ENCODE measurements at regions of chr13 and their contacts with region 1.

Region 1: GRCh38 chr13:44917589-44918325 is 71.5 kb downstream of the NUFIP1 start:
- DNase-seq: peak; percentile 97
- H3K4me3 ChIP-seq: peak overlapping the region; percentile 53
- H3K27ac ChIP-seq: peak overlapping the region; percentile 90
- H3K4me1 ChIP-seq: peaks cover 15% of the 10 kb centered on the region
- H3K27me3 ChIP-seq: no peaks in the 10 kb centered on the region
- CTCF ChIP-seq: peak; percentile 38; the same call in 1 of the 2 replicates

Region 2: GRCh38 chr13:44404261-44405132 is 513.3 kb before region 1 on chr13:
- CTCF ChIA-PET with region 1: no interaction called
- POLR2A ChIA-PET with region 1: interaction called, 16 read pairs
- intact Hi-C with region 1: no loop called
- DNase-seq: no peak
- H3K4me3 ChIP-seq: no peak overlapping the region
- H3K27ac ChIP-seq: no peak overlapping the region
- H3K4me1 ChIP-seq: no peaks in the 10 kb centered on the region
- H3K27me3 ChIP-seq: no peaks in the 10 kb centered on the region
- CTCF ChIP-seq: no peak

Region 3: DNA sequence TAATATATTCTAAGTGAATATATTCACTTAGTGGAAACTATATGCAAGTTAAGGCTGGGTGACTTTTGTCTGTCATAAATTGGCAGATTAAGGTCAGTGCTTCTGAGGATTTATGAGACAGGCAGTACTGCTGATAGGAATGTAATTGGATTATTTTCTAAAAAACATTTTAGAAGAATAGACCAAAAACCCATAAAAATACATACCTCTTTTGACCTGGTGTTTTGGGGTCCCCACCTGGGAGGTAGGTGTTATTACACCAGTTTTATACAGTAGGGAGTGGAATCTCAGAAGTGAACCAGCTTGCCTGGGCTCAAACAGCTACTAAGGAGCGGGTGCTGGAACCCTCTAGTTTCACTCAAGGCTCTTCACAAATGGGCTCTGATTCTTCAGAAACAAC is 572.3 kb after region 1 on chr13:
- CTCF ChIA-PET with region 1: no interaction called
- POLR2A ChIA-PET with region 1: no interaction called
- intact Hi-C with region 1: no loop called
- DNase-seq: peak; percentile 6
- H3K4me3 ChIP-seq: no peak overlapping the region
- H3K27ac ChIP-seq: no peak overlapping the region
- H3K4me1 ChIP-seq: peaks cover 7% of the 10 kb centered on the region
- H3K27me3 ChIP-seq: no peaks in the 10 kb centered on the region
- CTCF ChIP-seq: no peak; the same call in 1 of the 2 replicates